Head of caudate nucleus (tissue), 42 donors: ENCODE measurements at regions of chr9 and their contacts with region 1.

Region 1: GRCh38 chr9:19048966-19049916 is at the start of gene RRAGA:
- DNase-seq: peak; percentile 88 to 97 (median 95)

Region 2: GRCh38 chr9:19102631-19103345 is 53.5 kb after region 1 on chr9 and contains the start of gene HAUS6:
- intact Hi-C with region 1: loop called (anchors 2 kb)
- DNase-seq: peak; percentile 94 to 99 (median 97)

Region 3: DNA sequence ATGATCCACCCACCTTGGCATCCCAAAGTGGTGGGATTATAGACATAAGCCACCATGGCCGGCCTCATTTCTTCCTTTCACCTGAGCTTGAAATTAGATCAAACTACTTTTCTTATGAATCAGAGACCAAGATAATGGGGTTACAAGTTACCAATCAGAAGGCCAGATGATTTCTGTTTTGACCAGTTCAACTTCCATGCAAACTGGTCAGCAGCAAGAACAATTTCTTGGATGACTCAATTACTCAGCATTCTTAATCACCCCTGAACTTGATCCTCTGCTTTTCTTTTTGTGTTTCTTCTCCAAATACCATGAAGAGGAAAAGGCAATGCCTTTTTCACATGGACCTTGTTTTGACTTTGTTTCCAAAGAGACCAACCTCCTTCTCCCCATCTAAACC is 88.0 kb after region 1 on chr9:
- intact Hi-C with region 1: no loop called
- DNase-seq: no peak

Region 4: DNA sequence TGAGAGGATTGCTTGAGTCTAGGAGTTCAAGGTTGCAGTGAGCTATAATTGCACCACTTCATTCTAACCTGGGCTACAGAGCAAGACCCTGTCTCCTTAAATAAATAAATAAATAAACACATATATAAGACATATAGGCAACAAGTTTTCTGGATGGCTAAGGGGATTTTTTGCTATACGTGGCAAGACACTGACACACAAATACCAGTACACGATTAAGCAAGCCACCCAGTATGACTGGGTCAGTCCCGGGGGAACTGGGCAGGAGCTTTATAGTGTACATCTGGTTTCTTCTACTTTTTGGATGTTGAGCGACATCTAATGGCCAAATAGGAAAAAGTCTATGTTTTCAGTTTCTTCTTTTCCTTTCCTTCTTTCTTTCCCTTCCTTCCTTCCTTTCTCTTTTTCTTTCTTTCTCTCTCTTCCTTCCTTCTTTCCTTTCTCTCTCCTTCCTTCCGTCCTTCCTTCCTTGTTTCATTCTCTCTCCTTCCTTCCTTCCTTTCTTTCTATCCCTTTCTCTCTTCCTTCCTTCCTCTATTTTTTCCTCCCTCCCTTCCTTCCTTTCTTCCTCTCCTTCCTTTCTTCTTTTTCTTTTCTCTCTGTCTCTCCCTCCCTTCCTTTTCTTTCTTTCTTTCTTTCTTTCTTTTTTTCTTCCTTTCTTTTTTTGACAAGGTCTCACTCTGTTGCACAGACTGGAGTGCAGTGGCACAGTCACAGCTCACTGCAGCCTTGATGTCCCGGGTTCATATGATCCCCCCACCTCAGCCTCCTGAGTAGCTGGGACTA is 125.1 kb after region 1 on chr9:
- intact Hi-C with region 1: loop called (anchors 5 kb)
- DNase-seq: peak in 9 of 42 donors; percentile 12 to 57 (median 34)

Region 5: DNA sequence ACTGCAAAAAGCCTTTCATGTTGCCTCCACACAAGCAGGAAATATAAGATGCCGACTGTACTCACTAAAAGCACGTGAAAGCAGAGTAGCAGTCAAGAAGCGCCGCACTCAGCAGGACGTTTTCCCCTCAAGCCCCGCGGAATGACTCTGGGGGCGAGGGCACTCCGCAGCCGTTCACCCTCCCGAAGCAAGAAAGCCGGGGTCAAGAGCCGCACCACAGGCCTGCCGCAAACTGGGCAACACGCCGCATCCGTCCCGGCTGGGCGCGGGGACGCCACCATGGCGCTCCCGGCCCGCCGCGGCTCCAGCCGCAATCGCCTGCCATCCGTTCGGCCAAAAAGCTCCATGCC is 330.4 kb after region 1 on chr9:
- intact Hi-C with region 1: loop called (anchors 10 kb)
- DNase-seq: peak in 17 of 42 donors; percentile 5 to 67 (median 35)

Region 6: DNA sequence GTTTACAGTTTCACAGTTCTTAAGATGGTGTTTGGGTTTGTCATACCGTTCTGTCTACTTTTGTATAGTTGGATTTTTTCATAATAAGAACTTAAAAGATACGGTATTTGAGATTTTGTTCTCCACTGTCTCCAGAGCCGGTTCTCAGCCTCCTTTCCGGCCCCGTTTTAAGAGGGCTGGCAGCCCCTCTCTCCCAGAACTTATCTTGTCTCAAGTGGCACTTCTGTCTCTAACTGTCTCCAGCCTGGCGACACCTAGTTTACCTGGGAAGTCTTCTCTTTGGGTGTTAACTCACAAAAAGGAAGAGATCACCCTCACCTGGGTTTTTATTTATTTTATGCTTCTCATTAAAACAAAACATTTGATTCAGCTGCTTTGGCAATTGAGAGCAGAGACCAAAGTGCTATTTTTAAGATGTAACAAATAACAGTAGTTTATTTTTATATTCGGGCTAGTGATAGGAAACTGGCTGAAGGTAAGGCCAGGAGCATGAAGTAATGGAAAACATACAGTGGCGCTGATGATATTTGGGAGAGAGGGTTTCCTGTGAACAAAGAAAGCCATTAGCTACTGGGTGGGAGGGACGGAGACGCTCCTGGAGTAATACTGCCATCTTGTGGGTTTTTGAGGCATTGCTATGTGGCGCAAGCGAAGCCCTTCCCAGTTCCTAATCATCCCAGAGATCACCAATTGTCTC is 407.9 kb after region 1 on chr9:
- intact Hi-C with region 1: loop called (anchors 5 kb)
- DNase-seq: peak; percentile 45 to 91 (median 72)